ENCODE measurements at regions of chr10 and their contacts with region 1.

Region 1: GRCh38 chr10:60099998-60100747 is 193.8 kb upstream of the CCDC6 start:
- DNase-seq: no peak
- ATAC-seq: peak; percentile 81
- H3K4me3 ChIP-seq: no peak overlapping the region
- H3K27ac ChIP-seq: no peak overlapping the region
- H3K4me1 ChIP-seq: no peaks in the 10 kb centered on the region
- H3K27me3 ChIP-seq: no peaks in the 10 kb centered on the region; the same call in 1 of the 2 replicates
- CTCF ChIP-seq: peak; percentile 64; the same call in 1 of the 2 replicates

Region 2: DNA sequence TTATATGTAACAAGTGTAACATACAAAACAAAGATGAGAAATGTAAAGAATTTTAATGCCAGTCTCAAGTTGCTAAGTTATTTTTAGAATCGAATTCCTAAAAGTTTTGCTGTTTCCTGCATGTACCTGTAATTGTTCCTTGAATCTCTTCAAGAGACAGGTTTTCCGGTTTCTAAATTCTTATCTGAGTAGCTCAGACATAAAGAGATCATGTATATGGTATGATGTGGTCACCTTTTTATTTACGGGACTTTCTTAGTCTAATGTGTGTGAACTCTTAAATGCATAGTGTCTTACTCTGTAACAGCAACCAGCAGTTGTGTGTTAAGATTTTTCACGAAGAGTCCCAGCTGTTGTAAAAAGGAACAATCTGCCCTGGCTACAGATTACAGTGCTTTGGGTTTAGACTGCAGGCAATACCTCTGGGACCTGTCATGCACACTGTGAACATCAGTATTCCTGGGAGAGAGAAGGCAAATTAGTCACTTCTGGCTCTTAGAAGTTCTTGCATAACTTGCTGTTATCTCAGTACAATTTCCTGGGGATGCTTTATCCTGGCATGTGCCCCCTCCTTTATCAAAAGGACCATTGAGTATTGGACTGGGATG is 1324.1 kb before region 1 on chr10:
- CTCF ChIA-PET with region 1: no interaction called
- POLR2A ChIA-PET with region 1: no interaction called
- in situ Hi-C with region 1: no loop called
- intact Hi-C with region 1: no loop called
- DNase-seq: no peak
- ATAC-seq: no peak; the same call in 1 of the 2 replicates
- H3K4me3 ChIP-seq: no peak overlapping the region
- H3K27ac ChIP-seq: no peak overlapping the region
- H3K4me1 ChIP-seq: no peaks in the 10 kb centered on the region
- H3K27me3 ChIP-seq: no peaks in the 10 kb centered on the region
- CTCF ChIP-seq: no peak

Region 3: DNA sequence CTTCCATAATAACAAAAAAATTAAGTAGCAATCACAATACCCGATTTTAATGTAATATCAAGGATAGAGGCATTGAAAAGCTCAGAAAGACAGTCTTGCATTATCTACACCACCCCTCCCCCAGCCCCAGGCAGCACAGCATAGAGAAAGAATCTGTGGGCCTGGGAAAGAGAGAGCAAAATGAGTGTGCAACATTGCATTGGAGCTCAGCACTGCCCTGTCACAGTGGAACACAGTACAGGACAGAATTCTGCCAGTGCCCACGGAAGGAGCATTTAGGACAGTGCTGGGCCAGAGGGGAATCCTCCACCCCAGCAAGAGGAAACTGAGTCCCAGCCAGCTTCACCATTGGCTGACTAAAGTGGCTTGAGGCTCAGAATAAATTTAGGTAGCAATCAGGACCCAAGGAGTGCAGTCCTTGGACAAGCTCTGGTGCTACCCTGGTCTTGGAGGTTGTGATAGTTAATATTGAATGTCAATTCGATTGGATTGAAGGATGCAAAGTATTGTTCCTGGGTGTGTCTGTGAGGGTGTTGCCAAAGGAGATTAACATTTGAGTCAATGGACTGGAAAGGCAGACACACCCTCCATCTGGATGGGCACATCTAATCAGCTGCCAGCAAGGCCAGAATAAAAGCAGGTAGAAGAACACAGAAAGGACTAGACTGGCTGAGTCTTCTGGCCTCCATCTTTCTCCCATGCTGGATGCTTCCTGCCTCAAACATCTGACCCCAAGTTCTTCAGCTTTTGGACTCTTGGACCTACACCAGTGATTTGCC is 55.1 kb after region 1 on chr10:
- CTCF ChIA-PET with region 1: no interaction called
- POLR2A ChIA-PET with region 1: interaction called, 19 read pairs
- in situ Hi-C with region 1: no loop called
- intact Hi-C with region 1: no loop called
- DNase-seq: no peak
- ATAC-seq: no peak
- H3K4me3 ChIP-seq: no peak overlapping the region
- H3K27ac ChIP-seq: no peak overlapping the region
- H3K4me1 ChIP-seq: no peaks in the 10 kb centered on the region
- H3K27me3 ChIP-seq: no peaks in the 10 kb centered on the region
- CTCF ChIP-seq: no peak

Region 4: DNA sequence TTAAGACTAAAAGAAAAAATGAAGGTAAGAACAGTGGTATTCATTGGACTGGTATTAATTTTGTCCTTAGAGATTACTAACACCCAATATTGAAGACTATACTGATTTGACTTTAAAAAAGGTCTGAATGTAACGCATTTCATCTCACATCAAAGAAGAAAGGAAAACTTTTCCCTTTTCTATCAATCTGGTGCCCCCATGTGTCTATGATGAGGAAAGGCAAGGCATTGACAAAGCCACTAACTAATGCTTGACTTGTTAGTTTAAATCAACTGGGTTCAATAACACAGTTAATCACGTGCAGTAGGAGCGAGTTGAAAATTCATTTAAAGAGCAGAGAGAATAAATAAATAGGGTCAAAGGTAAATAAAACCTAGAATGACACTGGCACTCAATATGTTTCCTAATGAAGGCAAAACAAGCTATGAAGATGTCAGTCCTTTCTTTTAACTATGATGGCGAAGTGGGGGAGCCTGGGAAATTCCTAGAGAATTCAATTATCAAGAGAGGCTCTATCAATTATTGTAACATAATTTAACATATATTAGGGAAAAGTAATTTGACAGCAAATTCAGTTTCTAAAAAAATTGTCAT is 108.6 kb after region 1 on chr10:
- CTCF ChIA-PET with region 1: interaction called, 10 read pairs
- POLR2A ChIA-PET with region 1: no interaction called
- in situ Hi-C with region 1: no loop called
- intact Hi-C with region 1: loop called (anchors 2 kb)
- DNase-seq: peak; percentile 25
- ATAC-seq: no peak
- H3K4me3 ChIP-seq: no peak overlapping the region
- H3K27ac ChIP-seq: no peak overlapping the region
- H3K4me1 ChIP-seq: no peaks in the 10 kb centered on the region
- H3K27me3 ChIP-seq: peaks cover 3% of the 10 kb centered on the region; the same call in 1 of the 2 replicates
- CTCF ChIP-seq: peak; percentile 76; the same call in 1 of the 2 replicates

Region 5: GRCh38 chr10:60434418-60435046 is 334.4 kb after region 1 on chr10:
- CTCF ChIA-PET with region 1: interaction called, 4 read pairs
- POLR2A ChIA-PET with region 1: no interaction called
- in situ Hi-C with region 1: no loop called
- intact Hi-C with region 1: loop called (anchors 1 kb)
- DNase-seq: peak; percentile 46
- ATAC-seq: peak; percentile 81; the same call in 1 of the 2 replicates
- H3K4me3 ChIP-seq: no peak overlapping the region
- H3K27ac ChIP-seq: no peak overlapping the region
- H3K4me1 ChIP-seq: no peaks in the 10 kb centered on the region
- H3K27me3 ChIP-seq: no peaks in the 10 kb centered on the region
- CTCF ChIP-seq: peak; percentile 75; the same call in 1 of the 2 replicates

Region 6: GRCh38 chr10:60646966-60647796 is 547.0 kb after region 1 on chr10:
- CTCF ChIA-PET with region 1: no interaction called
- POLR2A ChIA-PET with region 1: no interaction called
- in situ Hi-C with region 1: no loop called
- intact Hi-C with region 1: loop called (anchors 1 kb)
- DNase-seq: peak; percentile 42
- ATAC-seq: peak; percentile 76
- H3K4me3 ChIP-seq: no peak overlapping the region
- H3K27ac ChIP-seq: no peak overlapping the region
- H3K4me1 ChIP-seq: no peaks in the 10 kb centered on the region
- H3K27me3 ChIP-seq: no peaks in the 10 kb centered on the region
- CTCF ChIP-seq: peak; percentile 77; the same call in 1 of the 2 replicates